Activated CD4-positive, alpha-beta memory T cell treated with anti-CD3 and anti-CD28 coated beads, Interleukin-2, amount 10 ng/mL, durations not matched to agents 7 days and 5 days (primary cell): ENCODE measurements at regions of chr2 and their contacts with region 1.

Region 1: DNA sequence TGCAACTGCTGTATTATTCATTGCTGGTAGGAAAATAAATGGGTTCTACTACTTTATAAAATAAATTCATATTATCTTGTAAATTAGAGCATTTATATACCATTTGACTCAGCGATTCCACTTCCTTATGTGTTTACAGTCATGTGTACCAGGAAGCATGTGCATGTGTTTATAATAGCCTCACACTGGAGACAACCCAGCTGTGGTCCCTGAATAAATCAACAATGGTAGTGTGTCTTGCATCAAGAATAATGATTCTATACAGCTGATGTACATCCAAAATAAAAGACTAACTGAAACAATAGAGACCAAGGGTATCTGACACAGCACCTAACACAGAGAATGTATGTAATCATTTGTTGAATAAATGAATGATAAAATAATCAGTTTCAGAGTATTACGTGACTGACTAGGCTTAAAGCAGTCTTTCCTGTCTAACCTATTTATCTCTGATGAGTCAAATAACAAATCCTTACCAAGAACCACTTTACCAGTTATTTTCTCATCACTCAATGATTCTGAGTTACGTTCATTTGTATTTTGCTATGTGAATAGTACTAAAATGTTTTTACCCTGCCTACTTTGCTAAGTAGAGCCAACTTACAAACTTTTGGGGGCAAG is 216.8 kb downstream of the UBE2E3 start:
- DNase-seq: peak; percentile 22
- H3K4me3 Mint-ChIP-seq: peak overlapping the region; percentile 18
- H3K27ac Mint-ChIP-seq: peak overlapping the region; percentile 89
- H3K4me1 Mint-ChIP-seq: peaks cover 71% of the 10 kb centered on the region
- H3K27me3 Mint-ChIP-seq: no peaks in the 10 kb centered on the region

Region 2: DNA sequence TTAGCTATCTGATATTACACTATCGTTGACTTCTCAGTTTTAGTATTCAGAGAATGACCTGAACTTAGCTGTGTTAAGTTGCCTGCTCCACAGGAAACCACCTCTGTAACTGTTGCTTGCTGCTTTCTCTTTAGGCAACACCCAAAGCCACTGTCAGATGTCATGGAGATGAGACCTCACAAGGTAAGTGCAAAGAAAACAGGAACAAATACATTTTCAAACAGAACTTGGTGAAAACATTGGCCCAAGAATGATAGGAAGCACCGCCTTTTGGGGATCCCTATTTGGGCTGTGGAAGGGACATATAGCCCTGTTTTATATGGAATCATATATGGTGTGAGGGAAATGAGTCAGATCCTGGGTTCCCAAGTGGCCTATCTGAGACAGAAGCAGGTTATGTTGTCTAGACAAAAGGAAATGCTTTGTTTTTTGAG is 73.4 kb before region 1 on chr2:
- CTCF ChIA-PET with region 1: interaction called, 3 read pairs
- POLR2A ChIA-PET with region 1: interaction called, 50 read pairs
- DNase-seq: peak; percentile 75
- H3K4me3 Mint-ChIP-seq: peak overlapping the region; percentile 48
- H3K27ac Mint-ChIP-seq: peak overlapping the region; percentile 85
- H3K4me1 Mint-ChIP-seq: peaks cover 74% of the 10 kb centered on the region
- H3K27me3 Mint-ChIP-seq: no peaks in the 10 kb centered on the region

Region 3: DNA sequence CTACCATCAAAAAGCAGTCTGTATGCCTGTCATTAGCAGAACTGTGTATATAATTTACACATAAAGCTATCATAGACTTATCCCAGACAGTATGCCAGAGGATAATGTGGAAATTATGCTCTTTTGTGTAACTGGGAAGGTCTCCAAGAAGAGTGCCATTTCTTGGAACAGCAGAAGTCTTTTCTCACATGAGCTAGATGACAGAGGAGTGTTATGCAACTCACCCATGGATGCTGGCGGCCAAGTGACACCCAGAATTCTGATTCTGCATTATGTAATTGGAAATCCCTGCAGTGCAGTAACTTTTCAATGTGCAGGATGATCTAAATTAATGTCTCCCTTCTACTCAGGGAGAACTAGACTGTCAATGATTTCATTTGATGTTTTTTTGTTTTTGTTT is 56.8 kb before region 1 on chr2:
- CTCF ChIA-PET with region 1: no interaction called
- POLR2A ChIA-PET with region 1: interaction called, 24 read pairs
- DNase-seq: no peak
- H3K4me3 Mint-ChIP-seq: peak overlapping the region; percentile 65
- H3K27ac Mint-ChIP-seq: peak overlapping the region; percentile 79
- H3K4me1 Mint-ChIP-seq: peaks cover 76% of the 10 kb centered on the region
- H3K27me3 Mint-ChIP-seq: no peaks in the 10 kb centered on the region

Region 4: GRCh38 chr2:181183878-181184542 is 13.2 kb before region 1 on chr2:
- CTCF ChIA-PET with region 1: interaction called, 8 read pairs
- POLR2A ChIA-PET with region 1: interaction called, 22 read pairs
- DNase-seq: no peak
- H3K4me3 Mint-ChIP-seq: no peak overlapping the region
- H3K27ac Mint-ChIP-seq: no peak overlapping the region
- H3K4me1 Mint-ChIP-seq: peaks cover 41% of the 10 kb centered on the region
- H3K27me3 Mint-ChIP-seq: no peaks in the 10 kb centered on the region

Region 5: DNA sequence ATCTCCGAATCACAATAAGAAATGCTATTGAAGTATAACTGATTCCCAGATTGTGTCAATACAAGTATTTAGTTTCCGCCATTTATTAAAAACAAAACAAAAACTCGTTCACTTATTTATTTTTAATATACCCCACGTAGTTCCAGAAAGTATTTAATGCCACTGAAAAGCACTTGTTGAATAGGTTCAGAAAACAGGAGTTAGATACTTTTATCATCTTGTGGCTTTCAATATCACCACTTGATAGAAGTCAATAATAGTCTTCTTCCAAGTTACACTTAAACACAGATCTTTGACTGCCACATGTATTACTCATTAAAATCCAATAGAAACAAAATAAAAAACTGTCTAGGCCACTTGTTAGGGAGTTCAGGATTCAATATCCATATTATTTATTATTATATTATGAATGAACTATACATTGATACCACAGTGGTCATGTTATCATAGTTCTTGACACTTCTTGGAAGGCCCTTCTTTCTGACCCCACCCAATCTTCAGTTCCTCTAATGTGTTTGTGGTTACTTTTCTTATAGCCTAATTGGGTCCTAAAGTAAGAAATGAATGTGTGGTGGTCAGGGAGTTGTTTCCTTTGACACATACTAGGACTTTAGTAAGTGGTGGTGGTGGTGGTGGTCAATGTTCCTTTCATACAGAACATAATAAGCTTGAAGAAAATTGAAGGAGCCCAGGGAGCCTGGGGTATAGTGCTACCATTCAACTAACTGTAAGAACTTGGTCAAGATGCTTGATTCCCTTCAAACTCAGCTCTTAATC is 38.6 kb after region 1 on chr2:
- CTCF ChIA-PET with region 1: interaction called, 6 read pairs
- POLR2A ChIA-PET with region 1: interaction called, 14 read pairs
- DNase-seq: peak; percentile 27
- H3K4me3 Mint-ChIP-seq: no peak overlapping the region
- H3K27ac Mint-ChIP-seq: peak overlapping the region; percentile 19
- H3K4me1 Mint-ChIP-seq: peaks cover 72% of the 10 kb centered on the region
- H3K27me3 Mint-ChIP-seq: no peaks in the 10 kb centered on the region

Region 6: GRCh38 chr2:181305301-181306123 is 108.3 kb after region 1 on chr2:
- CTCF ChIA-PET with region 1: interaction called, 3 read pairs
- POLR2A ChIA-PET with region 1: interaction called, 125 read pairs
- DNase-seq: peak; percentile 72
- H3K4me3 Mint-ChIP-seq: peak overlapping the region; percentile 47
- H3K27ac Mint-ChIP-seq: peak overlapping the region; percentile 85
- H3K4me1 Mint-ChIP-seq: peaks cover 78% of the 10 kb centered on the region
- H3K27me3 Mint-ChIP-seq: no peaks in the 10 kb centered on the region